ENCODE measurements at regions of chr22 and their contacts with region 1.

Region 1: GRCh38 chr22:23029521-23030228 is 40.6 kb upstream of the GNAZ start:
- DNase-seq: no peak
- ATAC-seq: no peak
- H3K4me3 ChIP-seq: no peak overlapping the region
- H3K27ac ChIP-seq: no peak overlapping the region
- H3K4me1 ChIP-seq: no peaks in the 10 kb centered on the region
- H3K27me3 ChIP-seq: no peaks in the 10 kb centered on the region
- CTCF ChIP-seq: no peak
- EP300 ChIP-seq: no peak
- POLR2A ChIP-seq: no peak
- RAD21 ChIP-seq: no peak

Region 2: DNA sequence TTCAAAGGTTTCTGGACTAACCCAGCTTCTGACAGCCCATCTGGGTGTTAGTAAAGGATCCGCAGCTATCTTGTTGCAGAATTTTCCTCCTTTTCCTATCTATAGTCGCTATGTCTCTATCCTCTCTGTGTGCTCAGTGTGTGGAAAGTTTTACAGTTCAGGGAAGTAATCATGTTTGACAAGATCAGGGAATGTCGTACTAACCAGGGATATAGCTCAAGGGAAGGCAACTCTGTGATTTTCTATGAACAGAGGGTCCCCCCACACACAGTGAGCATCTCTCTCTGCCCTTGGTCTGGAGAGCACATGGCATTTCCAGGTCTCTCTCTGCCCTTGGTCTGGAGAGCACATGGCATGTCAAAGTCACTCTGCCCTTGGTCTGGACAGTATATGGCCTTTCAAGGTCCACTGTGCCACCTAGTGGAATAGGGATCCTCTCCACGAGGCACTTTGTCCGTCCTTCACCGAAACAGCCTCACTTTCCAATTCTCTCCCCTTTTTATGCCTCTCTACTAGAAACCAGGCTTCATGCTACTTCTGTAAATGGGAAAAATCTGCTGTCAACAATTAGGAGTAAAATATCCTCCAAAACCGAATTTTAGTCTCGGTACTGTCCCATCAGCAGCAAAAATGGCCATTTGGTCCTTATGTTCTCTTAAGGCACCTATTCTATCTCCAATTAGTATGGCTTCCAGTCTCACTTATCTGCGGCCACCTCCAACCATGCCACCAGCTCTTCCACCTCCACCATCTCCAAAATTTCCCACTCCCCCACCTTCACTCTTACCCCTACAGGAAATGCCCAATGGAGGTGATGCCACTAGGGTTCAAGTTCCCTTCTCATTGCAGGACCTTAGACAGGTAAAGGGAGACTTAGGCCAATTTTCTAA is 53.4 kb before region 1 on chr22:
- CTCF ChIA-PET with region 1: no interaction called
- POLR2A ChIA-PET with region 1: no interaction called
- RAD21 ChIA-PET with region 1: no interaction called
- SMC1A ChIA-PET with region 1: no interaction called
- in situ Hi-C with region 1: no loop called
- intact Hi-C with region 1: no loop called
- DNase-seq: no peak
- ATAC-seq: no peak
- H3K4me3 ChIP-seq: no peak overlapping the region
- H3K27ac ChIP-seq: no peak overlapping the region
- H3K4me1 ChIP-seq: no peaks in the 10 kb centered on the region
- H3K27me3 ChIP-seq: no peaks in the 10 kb centered on the region; a peak in 1 of 4 replicates
- CTCF ChIP-seq: no peak
- EP300 ChIP-seq: no peak
- POLR2A ChIP-seq: no peak
- RAD21 ChIP-seq: no peak

Region 3: GRCh38 chr22:23000657-23001347 is 28.9 kb before region 1 on chr22:
- CTCF ChIA-PET with region 1: no interaction called
- POLR2A ChIA-PET with region 1: no interaction called
- RAD21 ChIA-PET with region 1: no interaction called
- SMC1A ChIA-PET with region 1: no interaction called
- in situ Hi-C with region 1: no loop called
- intact Hi-C with region 1: no loop called
- DNase-seq: no peak
- ATAC-seq: no peak
- H3K4me3 ChIP-seq: no peak overlapping the region
- H3K27ac ChIP-seq: no peak overlapping the region
- H3K4me1 ChIP-seq: no peaks in the 10 kb centered on the region
- H3K27me3 ChIP-seq: no peaks in the 10 kb centered on the region
- CTCF ChIP-seq: no peak
- EP300 ChIP-seq: no peak
- POLR2A ChIP-seq: no peak
- RAD21 ChIP-seq: no peak

Region 4: DNA sequence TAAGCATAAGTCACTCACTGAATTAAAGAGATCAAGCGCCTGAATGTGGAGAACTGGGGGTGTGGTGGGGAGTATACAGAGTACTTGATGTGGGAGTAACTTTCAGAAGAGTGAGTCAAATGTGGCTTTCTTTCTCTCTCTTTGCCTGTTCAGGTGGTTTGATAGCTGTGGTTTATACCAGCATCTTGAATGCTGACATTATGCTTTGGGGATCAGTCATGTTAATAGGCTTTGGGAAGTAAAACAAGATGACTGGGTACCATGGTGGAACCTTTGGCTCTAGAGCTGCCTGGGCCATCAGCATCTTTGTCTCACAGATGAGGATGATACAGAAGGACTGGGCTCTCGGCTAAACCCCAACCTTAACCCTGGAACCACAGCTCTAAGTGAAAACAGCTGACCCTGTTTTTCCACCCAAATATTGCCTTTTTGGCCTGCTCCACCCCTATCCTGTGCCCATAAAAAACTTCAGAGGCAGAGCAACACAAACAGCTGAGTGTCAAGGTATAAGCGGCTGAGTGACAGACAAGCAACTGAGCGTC is 17.5 kb before region 1 on chr22:
- CTCF ChIA-PET with region 1: interaction called, 5 read pairs
- POLR2A ChIA-PET with region 1: no interaction called
- RAD21 ChIA-PET with region 1: no interaction called
- SMC1A ChIA-PET with region 1: interaction called, 10 read pairs
- in situ Hi-C with region 1: no loop called
- intact Hi-C with region 1: no loop called
- DNase-seq: peak; percentile 36
- ATAC-seq: peak; percentile 98
- H3K4me3 ChIP-seq: no peak overlapping the region
- H3K27ac ChIP-seq: no peak overlapping the region
- H3K4me1 ChIP-seq: peaks cover 14% of the 10 kb centered on the region
- H3K27me3 ChIP-seq: 0 out of 4 replicates have a peak, but pooled peaks cover 0 to 3% of the 10 kb centered on the region in 2 experiments
- CTCF ChIP-seq: no peak
- EP300 ChIP-seq: peak in 1 of 2 experiments; percentile 56; a peak in 1 of 4 replicates
- POLR2A ChIP-seq: no peak
- RAD21 ChIP-seq: no peak